ENCODE measurements at regions of chr22 and their contacts with region 1.

Region 1: DNA sequence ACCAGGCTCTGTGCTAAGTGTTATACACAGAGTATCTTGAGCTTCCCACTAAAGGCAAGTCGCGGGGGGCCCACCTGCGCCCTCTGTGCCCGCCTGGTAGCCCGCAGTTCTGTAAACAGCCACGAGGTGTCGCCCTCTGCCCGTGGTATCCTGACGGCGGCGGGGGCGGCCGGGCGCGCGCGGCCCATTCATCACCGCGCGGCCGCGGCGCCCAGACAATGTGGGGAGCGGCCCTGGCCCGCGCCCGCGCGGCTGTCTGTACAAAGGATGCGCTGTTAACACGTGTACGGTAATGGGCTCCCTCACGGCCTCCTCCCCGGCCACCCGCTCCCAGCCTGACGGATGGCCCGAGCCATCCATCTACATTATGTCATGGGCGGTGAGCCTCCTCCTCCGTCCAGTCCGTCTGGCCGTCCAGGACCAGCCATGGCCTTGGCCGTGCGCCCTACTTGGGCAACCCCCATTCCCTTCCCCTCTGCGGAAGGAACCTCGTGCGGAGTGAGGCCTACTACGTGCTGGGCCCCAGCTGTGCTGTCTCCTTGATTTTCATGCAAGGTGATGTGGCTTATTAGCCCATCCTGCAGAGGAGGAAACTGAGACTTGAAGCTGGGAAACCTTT is 99.4 kb downstream of the MIAT start:
- DNase-seq: peak; percentile 50 to 79 (median 67)
- ATAC-seq: peak; percentile 53 to 93 (median 83)
- H3K4me3 ChIP-seq: peak overlapping the region in 10 of 12 donors; percentile 8 to 42 (median 37)
- H3K27ac ChIP-seq: no peak overlapping the region
- H3K4me1 ChIP-seq: peaks cover 0 to 7% (median 0%) of the 10 kb centered on the region in 12 donors
- H3K27me3 ChIP-seq: no peaks in the 10 kb centered on the region
- CTCF ChIP-seq: peak; percentile 82 to 98 (median 92)
- POLR2A ChIP-seq: no peak

Region 2: DNA sequence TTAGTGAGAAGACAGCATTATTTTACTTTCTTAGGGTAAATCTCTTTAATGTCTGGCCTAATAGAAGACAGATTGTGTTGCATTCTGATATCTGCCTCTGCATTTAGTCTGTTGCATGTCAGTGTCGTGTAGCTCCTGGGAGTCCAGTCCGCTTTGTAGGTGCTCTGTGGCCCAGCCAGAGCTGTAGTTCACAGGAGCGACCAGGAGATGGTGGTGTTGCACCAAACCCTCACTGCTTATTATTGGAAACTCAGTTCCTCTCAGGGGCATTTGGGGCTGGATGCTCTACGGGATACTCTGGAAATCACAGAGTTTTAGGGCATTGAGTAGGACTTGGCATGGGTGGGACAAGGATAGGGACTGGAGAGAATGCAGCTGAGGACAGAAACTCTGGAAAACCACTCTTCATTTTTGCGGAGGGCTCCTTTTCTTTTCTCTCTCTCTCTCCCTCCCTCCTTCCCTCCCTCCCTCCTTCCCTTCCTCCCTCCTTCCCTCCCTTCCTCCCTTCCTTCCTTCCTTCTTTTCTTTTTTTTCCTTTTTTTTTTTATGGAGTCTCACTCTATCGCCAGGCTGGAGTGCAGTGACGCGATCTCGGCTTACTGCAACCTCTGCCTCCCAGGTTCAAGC is 77.7 kb before region 1 on chr22:
- intact Hi-C with region 1: loop called in 2 of 10 experiments (anchors 5 to 10 kb)
- DNase-seq: peak; percentile 65 to 82 (median 67)
- ATAC-seq: peak; percentile 49 to 88 (median 80)
- H3K4me3 ChIP-seq: no peak overlapping the region
- H3K27ac ChIP-seq: no peak overlapping the region
- H3K4me1 ChIP-seq: peaks cover 0 to 30% (median 10%) of the 10 kb centered on the region in 12 donors
- H3K27me3 ChIP-seq: no peaks in the 10 kb centered on the region
- CTCF ChIP-seq: peak; percentile 88 to 98 (median 95)
- POLR2A ChIP-seq: no peak

Region 3: GRCh38 chr22:26783891-26784290 is 27.1 kb after region 1 on chr22:
- intact Hi-C with region 1: no loop called
- DNase-seq: no peak
- ATAC-seq: no peak
- H3K4me3 ChIP-seq: no peak overlapping the region
- H3K27ac ChIP-seq: no peak overlapping the region
- H3K4me1 ChIP-seq: peaks cover 0 to 8% (median 0%) of the 10 kb centered on the region in 12 donors
- H3K27me3 ChIP-seq: no peaks in the 10 kb centered on the region
- CTCF ChIP-seq: no peak
- POLR2A ChIP-seq: no peak

Region 4: DNA sequence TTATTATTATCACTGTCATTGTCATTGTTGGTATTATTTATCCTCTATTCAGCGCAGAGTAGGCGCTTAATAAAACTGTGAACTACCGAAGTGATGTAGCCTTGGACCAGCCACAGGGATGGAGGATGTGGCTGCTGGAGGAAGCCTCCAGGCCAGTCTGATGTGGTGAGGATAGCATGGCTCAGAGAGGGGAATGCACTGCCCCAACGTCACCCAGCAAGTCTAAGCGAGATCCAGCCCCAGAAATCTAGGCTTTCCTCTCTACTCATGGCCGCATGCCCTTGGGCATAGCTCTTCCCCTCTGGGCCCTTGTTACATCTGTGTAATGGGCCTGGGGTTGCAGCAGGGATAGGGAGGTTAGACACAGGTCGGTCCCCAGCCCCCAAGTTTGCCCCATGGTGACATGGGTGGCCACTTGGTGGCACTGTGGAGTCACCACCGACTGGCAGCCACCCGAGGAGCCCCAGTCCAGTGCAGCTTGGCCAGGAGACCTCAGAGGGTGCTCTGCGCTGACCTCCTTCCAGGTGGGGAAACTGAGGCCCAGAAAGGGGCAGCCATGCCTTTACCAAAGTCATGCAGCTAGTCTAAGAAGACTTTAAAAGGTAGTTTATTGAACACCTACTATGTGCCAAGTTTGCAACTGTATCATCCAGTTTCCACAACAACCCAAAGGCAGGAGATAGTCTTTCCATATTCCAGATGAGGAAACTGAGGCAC is 649.0 kb after region 1 on chr22:
- intact Hi-C with region 1: loop called in 2 of 10 experiments (anchors 10 kb)
- DNase-seq: peak; percentile 47 to 83 (median 62)
- ATAC-seq: peak; percentile 74 to 89 (median 82)
- H3K4me3 ChIP-seq: no peak overlapping the region
- H3K27ac ChIP-seq: no peak overlapping the region
- H3K4me1 ChIP-seq: peaks cover 0 to 9% (median 0%) of the 10 kb centered on the region in 12 donors
- H3K27me3 ChIP-seq: peaks cover 0 to 24% (median 0%) of the 10 kb centered on the region in 9 donors
- CTCF ChIP-seq: peak; percentile 64 to 81 (median 74)
- POLR2A ChIP-seq: no peak

Region 5: GRCh38 chr22:27880778-27881394 is 1124.1 kb after region 1 on chr22:
- intact Hi-C with region 1: loop called in 1 of 10 experiments (anchors 10 kb)
- DNase-seq: peak in 1 of 5 donors; percentile 39
- ATAC-seq: peak; percentile 72 to 79 (median 76)
- H3K4me3 ChIP-seq: no peak overlapping the region
- H3K27ac ChIP-seq: peak overlapping the region in 6 of 12 donors; percentile 12 to 81 (median 36)
- H3K4me1 ChIP-seq: peaks cover 9 to 72% (median 50%) of the 10 kb centered on the region in 12 donors
- H3K27me3 ChIP-seq: no peaks in the 10 kb centered on the region
- CTCF ChIP-seq: peak; percentile 71 to 90 (median 84)
- POLR2A ChIP-seq: no peak